GM12878 (cell line): ENCODE measurements at regions of chr9 and their contacts with region 1.

Region 1: GRCh38 chr9:136170006-136170901 is 34.7 kb downstream of the LHX3 start:
- DNase-seq: no peak
- ATAC-seq: peak; percentile 95
- H3K4me3 ChIP-seq: no peak overlapping the region
- H3K27ac ChIP-seq: no peak overlapping the region
- H3K4me1 ChIP-seq: no peaks in the 10 kb centered on the region
- H3K27me3 ChIP-seq: peaks cover 0 to 4% of the 10 kb centered on the region in 2 experiments; a peak in 2 of 4 replicates
- CTCF ChIP-seq: peak; percentile 79 to 90 (median 80)
- EP300 ChIP-seq: no peak
- POLR2A ChIP-seq: no peak
- RAD21 ChIP-seq: peak; percentile 72

Region 2: DNA sequence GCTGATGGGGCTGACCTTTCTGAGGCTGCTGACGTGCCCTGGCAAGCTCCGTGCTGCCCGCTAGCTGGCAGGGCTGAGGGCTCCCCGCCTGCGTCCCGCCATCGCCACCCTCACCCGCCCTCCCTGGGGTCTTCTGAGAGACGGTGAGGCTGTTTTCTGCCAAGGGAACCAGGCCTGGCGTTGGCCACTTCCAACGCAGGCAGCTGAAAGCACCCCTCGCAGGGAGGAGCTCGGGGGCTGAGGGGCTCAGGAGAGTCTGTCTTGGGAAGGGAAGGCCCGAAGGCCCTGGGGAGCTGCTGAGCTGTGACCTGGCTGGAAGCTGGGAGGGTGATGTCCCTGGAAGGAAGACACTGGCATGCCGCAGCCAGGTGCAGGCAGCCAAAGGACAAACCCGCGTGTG is 41.8 kb before region 1 on chr9:
- CTCF ChIA-PET with region 1: no interaction called
- POLR2A ChIA-PET with region 1: interaction called, 11 read pairs
- RAD21 ChIA-PET with region 1: no interaction called
- SMC1A ChIA-PET with region 1: no interaction called
- in situ Hi-C with region 1: no loop called
- intact Hi-C with region 1: no loop called
- DNase-seq: no peak
- ATAC-seq: no peak
- H3K4me3 ChIP-seq: no peak overlapping the region
- H3K27ac ChIP-seq: no peak overlapping the region
- H3K4me1 ChIP-seq: no peaks in the 10 kb centered on the region
- H3K27me3 ChIP-seq: peaks cover 0 to 2% of the 10 kb centered on the region in 2 experiments; a peak in 2 of 4 replicates
- CTCF ChIP-seq: no peak
- EP300 ChIP-seq: no peak
- POLR2A ChIP-seq: no peak
- RAD21 ChIP-seq: no peak

Region 3: DNA sequence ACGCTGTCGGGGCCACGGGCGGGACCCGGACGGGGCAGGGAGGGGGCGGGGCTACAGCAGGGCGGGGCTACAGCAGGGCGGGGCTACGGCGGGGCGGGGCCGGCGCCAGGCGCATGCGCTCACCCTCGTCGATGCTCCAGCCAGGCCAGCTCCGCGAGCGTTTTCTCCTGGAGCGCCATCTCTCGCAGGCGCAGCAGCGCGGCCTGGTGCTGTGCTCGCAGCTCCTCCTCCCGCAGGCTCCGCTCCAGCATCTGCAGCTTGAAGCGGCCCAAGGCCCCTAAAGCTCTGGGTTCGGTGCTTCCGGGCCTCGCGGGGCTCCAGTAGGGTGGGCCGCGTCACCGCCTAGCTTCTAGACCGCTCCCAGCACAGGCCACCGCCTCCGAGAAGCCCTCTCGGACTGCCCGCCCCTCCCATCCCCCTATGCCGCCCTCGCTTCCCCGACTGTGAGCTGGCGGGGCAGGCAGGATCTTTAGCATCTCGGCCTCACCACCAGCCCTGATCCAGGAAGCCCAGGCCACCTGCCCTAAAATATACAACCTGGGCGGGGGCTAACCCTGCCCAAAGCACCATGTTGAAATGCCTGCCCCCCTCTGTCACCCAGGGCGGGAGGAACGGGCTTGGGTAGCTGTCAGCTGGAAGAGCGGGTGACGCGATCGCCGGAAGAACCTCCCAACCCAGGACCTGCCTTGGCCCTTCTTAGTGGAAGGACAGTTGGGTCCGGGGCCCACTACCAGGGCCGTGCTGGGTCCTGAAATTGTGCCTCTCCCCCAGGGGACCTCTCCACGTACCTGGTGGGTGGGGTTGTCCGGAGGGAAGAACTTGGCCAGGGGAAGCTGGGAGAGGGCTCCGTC is 97.2 kb after region 1 on chr9:
- CTCF ChIA-PET with region 1: interaction called, 8 read pairs
- POLR2A ChIA-PET with region 1: no interaction called
- RAD21 ChIA-PET with region 1: interaction called, 5 read pairs
- SMC1A ChIA-PET with region 1: interaction called, 4 read pairs
- in situ Hi-C with region 1: loop called (anchors 5 kb)
- intact Hi-C with region 1: no loop called
- DNase-seq: no peak
- ATAC-seq: peak; percentile 97
- H3K4me3 ChIP-seq: peak overlapping the region; percentile 83
- H3K27ac ChIP-seq: peak overlapping the region; percentile 30
- H3K4me1 ChIP-seq: no peaks in the 10 kb centered on the region
- H3K27me3 ChIP-seq: no peaks in the 10 kb centered on the region
- CTCF ChIP-seq: peak; percentile 14 to 54 (median 19); a peak in 3 of 6 replicates
- EP300 ChIP-seq: no peak
- POLR2A ChIP-seq: peak; percentile 89
- RAD21 ChIP-seq: peak; percentile 16; the same call in 1 of the 2 replicates

Region 4: DNA sequence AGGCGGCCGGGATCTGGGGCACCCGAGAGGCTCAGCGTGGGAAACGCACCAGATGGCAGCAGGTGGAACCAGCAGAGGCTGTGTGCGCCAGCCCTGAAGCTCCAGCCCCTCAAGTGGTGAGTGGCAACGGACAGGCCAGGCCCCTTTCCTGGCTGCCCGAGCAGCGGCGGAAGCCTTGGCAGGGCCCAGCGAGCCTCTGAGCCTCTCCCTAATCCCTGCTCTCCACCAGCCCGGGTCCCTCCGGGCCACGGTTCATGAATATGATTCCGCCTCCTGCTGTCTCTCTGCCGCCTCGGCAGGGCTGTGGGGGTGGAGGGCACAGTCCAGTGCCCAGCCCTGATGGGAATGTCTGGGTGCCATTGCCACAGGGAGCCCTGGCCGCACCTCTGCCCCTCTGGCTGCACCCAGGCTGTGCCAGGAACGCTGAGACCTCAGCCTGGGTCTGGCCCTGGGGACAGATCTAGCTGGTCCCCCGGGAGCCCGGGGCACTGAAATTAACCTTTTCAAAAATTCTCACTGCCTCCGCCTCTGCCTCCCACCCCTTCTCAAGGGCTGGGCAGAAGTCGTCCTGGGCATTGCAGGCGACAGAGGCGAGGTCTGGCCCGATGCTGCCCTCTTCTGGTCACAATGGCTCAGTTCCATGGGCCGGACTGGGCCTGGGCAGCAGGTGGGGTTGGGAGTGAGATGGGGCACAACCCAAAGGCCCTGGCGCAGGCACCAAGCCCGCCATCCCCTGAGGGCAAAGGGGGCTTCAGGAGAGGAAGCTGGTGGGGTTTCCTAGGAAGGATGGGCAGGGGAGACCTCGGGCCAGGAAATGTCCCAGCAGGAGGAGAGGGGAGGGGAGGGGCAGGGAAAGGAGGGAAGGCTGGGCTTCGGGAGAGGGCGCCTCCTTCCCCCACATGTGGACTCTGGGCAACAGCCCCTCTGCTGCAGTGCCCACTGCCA is 113.3 kb after region 1 on chr9:
- CTCF ChIA-PET with region 1: interaction called, 9 read pairs
- POLR2A ChIA-PET with region 1: no interaction called
- RAD21 ChIA-PET with region 1: interaction called, 10 read pairs
- SMC1A ChIA-PET with region 1: interaction called, 6 read pairs
- in situ Hi-C with region 1: no loop called
- intact Hi-C with region 1: loop called (anchors 1 kb)
- DNase-seq: peak; percentile 45
- ATAC-seq: peak; percentile 99
- H3K4me3 ChIP-seq: no peak overlapping the region
- H3K27ac ChIP-seq: no peak overlapping the region
- H3K4me1 ChIP-seq: no peaks in the 10 kb centered on the region
- H3K27me3 ChIP-seq: no peaks in the 10 kb centered on the region
- CTCF ChIP-seq: peak; percentile 88 to 93 (median 91)
- EP300 ChIP-seq: no peak
- POLR2A ChIP-seq: no peak
- RAD21 ChIP-seq: peak; percentile 89